HCT116 (cell line): ENCODE measurements at regions of chr3 and their contacts with region 1.

Region 1: DNA sequence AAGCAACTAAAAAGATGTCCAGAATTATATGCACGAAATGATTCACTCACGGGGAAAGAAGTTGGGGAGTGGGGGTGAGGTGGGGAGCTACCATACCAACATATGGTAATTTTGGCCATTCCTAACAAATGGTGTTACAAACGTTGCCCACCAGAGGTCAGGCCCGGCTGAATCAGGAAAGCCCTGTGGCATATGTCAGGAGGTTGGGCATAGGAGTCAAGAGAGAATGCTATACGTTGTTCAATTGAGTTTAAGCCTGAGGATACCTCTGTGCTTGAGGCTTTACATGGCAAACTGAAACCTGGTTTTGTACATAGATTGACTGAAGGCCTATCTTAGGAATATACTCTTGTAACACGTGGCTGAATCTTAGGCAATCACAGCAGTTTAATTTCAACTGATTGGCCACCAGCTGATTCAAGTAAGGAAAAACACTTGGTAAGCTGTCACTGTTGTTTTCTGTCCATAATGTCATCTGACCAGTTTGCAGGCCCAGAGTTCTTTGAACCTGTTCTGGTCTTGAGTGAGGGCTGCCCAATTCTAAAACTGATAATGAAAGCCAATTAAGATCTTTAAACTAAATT is 23.4 kb upstream of the SLC2A2 start:
- DNase-seq: peak; percentile 45
- ATAC-seq: peak; percentile 96
- H3K4me3 ChIP-seq: no peak overlapping the region
- H3K27ac ChIP-seq: no peak overlapping the region
- H3K4me1 ChIP-seq: peaks cover under 1 to 4% of the 10 kb centered on the region in 2 experiments
- H3K27me3 ChIP-seq: no peaks in the 10 kb centered on the region
- CTCF ChIP-seq: peak; percentile 62 to 77 (median 68); a peak in 5 of 6 replicates
- POLR2A ChIP-seq: no peak
- RAD21 ChIP-seq: peak; percentile 90

Region 2: DNA sequence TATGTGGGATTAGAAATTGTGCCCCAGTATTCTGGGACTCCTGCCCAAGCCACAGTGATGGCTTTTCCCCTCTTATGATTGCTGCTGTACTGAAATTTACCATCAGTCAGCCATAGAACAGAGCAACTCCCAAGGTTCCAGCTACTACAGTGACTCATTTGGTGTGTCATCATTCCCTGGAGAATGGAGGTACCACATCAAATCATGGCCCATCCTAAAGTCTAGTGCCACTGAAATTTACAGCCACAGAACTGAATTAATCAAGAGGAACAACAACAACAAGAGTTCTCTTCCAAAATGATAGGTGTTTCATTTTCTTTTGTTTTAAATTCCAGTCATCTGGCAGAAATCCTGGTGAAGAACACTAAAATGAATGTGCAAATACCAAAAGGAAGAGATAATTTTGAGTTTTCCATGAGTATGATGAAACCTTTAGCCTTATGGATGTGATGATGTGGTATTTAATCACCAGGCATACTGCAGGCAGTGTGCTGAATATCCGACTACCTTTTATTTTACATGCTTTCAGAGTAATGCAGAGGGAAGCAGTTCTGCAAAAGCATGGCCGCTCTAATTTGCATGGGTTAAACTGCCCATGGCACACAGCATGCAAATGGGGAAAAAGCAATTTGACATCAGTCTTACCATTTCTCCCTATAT is 52.2 kb after region 1 on chr3:
- CTCF ChIA-PET with region 1: no interaction called
- POLR2A ChIA-PET with region 1: no interaction called
- RAD21 ChIA-PET with region 1: no interaction called
- intact Hi-C with region 1: no loop called
- DNase-seq: no peak
- ATAC-seq: peak; percentile 52; the same call in 1 of the 2 replicates
- H3K4me3 ChIP-seq: no peak overlapping the region
- H3K27ac ChIP-seq: no peak overlapping the region
- H3K4me1 ChIP-seq: peaks cover 0 to 6% of the 10 kb centered on the region in 2 experiments; a peak in 1 of 4 replicates
- H3K27me3 ChIP-seq: no peaks in the 10 kb centered on the region
- CTCF ChIP-seq: no peak
- POLR2A ChIP-seq: no peak
- RAD21 ChIP-seq: no peak

Region 3: DNA sequence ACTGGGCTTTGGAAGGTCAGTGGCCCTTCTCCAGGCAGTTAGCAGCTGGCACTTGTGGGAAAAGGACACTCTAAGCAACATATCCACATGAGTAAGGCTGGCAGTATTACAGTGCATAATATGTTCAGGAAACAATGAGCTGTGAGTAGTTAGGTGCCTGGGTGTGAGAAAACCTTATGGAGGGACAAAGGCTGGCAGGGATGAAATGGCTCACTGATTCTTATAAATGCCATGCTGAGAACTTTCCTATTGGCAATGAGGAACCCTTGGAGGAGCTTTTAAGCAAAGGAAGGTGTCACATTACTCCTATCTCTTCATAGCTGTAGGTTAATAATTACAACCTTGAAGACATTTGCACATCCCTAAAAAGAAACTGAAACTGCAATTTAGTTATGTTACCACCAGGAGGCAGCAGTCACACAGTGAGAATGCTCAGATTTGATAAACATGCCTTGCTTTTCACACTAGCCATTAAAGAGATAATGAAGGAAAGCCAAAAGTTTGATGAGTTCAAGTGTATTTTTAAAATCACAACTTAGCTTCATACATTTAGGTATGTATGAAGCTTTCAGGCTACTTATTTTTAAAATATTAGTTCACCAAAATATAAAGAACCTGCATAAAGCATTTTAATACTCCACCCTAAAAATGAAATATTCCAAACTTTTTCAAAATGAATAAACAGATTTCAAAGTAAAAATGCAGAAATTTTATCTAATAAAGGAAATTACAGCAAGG is 113.2 kb after region 1 on chr3:
- CTCF ChIA-PET with region 1: no interaction called
- POLR2A ChIA-PET with region 1: no interaction called
- RAD21 ChIA-PET with region 1: interaction called in 1 of 2 experiments, 3 read pairs
- intact Hi-C with region 1: loop called (anchors 10 kb)
- DNase-seq: no peak
- ATAC-seq: 0 out of 2 replicates have a peak, but pooled peaks have one; percentile 32
- H3K4me3 ChIP-seq: no peak overlapping the region
- H3K27ac ChIP-seq: no peak overlapping the region
- H3K4me1 ChIP-seq: peaks cover 0 to 8% of the 10 kb centered on the region in 2 experiments; a peak in 1 of 4 replicates
- H3K27me3 ChIP-seq: no peaks in the 10 kb centered on the region
- CTCF ChIP-seq: peak; percentile 49 to 82 (median 51); a peak in 5 of 6 replicates
- POLR2A ChIP-seq: no peak
- RAD21 ChIP-seq: peak; percentile 72

Region 4: DNA sequence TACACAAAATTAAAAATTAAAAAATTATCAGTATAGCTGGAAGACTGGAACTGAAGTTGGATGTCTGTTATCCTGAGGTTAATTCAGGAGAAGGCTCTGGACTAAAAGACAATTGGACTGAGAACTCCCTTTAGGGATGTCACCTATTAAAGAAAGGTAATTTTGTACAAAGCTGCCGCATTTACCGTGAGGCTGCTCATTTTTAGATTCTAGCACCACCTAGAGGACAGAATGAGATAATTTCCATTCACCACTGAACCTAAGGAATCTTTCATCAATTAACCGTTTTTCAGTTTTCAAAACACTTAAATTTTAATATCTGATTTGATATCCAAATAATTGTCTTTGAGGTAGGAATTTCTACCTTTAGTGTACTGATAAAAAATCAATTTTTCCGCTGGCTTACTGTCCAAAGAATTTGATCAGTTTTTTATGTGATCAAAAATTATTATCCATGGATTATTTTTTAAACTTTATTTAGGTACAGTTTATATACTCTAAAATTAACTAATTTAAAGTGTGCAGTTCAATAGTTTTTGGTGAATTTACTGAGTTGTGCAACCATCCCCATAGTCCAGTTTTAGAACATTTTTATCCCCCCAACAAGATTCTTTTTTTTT is 517.0 kb after region 1 on chr3:
- CTCF ChIA-PET with region 1: interaction called, 25 read pairs
- POLR2A ChIA-PET with region 1: no interaction called
- RAD21 ChIA-PET with region 1: interaction called in 1 of 2 experiments, 7 read pairs
- intact Hi-C with region 1: loop called (anchors 1 kb)
- DNase-seq: peak; percentile 28
- ATAC-seq: peak; percentile 69
- H3K4me3 ChIP-seq: no peak overlapping the region
- H3K27ac ChIP-seq: no peak overlapping the region
- H3K4me1 ChIP-seq: no peaks in the 10 kb centered on the region
- H3K27me3 ChIP-seq: no peaks in the 10 kb centered on the region
- CTCF ChIP-seq: peak; percentile 53 to 82 (median 72)
- POLR2A ChIP-seq: no peak
- RAD21 ChIP-seq: peak; percentile 95